CD4-positive, alpha-beta T cell (primary cell): ENCODE measurements at regions of chr3 and their contacts with region 1.

Region 1: GRCh38 chr3:69051756-69052471 is at the start of gene TMF1:
- DNase-seq: peak; percentile 94 to 100 (median 97)
- ATAC-seq: peak; percentile 86
- H3K4me3 ChIP-seq: peak within 1 kb of the TSS; percentile 81
- H3K4me3 Mint-ChIP-seq: peak within 1 kb of the TSS; percentile 98
- H3K27ac ChIP-seq: peak within 1 kb of the TSS; percentile 93 to 95
- H3K27ac Mint-ChIP-seq: peak within 1 kb of the TSS; percentile 99
- H3K4me1 ChIP-seq: peaks cover 17% of the 10 kb centered on the region
- H3K4me1 Mint-ChIP-seq: peaks cover 55% of the 10 kb centered on the region
- H3K27me3 ChIP-seq: no peaks in the 10 kb centered on the region
- H3K27me3 Mint-ChIP-seq: no peaks in the 10 kb centered on the region
- CTCF ChIP-seq: no peak
- total RNA-seq, gene TMF1: 89.0 to 101 TPM

Region 2: GRCh38 chr3:69013253-69014021 is 38.5 kb before region 1 on chr3 and contains the start of gene EOGT:
- CTCF ChIA-PET with region 1: no interaction called
- POLR2A ChIA-PET with region 1: interaction called, 14 read pairs
- intact Hi-C with region 1: loop called (anchors 5 kb)
- DNase-seq: peak; percentile 60 to 90 (median 76)
- ATAC-seq: peak; percentile 78
- H3K4me3 ChIP-seq: peak within 1 kb of the TSS; percentile 77
- H3K4me3 Mint-ChIP-seq: peak within 1 kb of the TSS; percentile 94
- H3K27ac ChIP-seq: peak within 1 kb of the TSS; percentile 10 to 39
- H3K27ac Mint-ChIP-seq: peak within 1 kb of the TSS; percentile 66
- H3K4me1 ChIP-seq: peaks cover 17% of the 10 kb centered on the region
- H3K4me1 Mint-ChIP-seq: peaks cover 34% of the 10 kb centered on the region
- H3K27me3 ChIP-seq: no peaks in the 10 kb centered on the region
- H3K27me3 Mint-ChIP-seq: no peaks in the 10 kb centered on the region
- CTCF ChIP-seq: peak; percentile 69
- total RNA-seq, gene EOGT: 13.0 to 13.4 TPM

Region 3: GRCh38 chr3:69065318-69065964 is 13.5 kb after region 1 on chr3:
- CTCF ChIA-PET with region 1: interaction called, 4 read pairs
- POLR2A ChIA-PET with region 1: interaction called, 17 read pairs
- intact Hi-C with region 1: loop called in 1 of 2 experiments (anchors 1 kb)
- DNase-seq: peak in 4 of 14 experiments; percentile 35 to 72 (median 52)
- ATAC-seq: peak; percentile 69
- H3K4me3 ChIP-seq: no peak overlapping the region
- H3K4me3 Mint-ChIP-seq: peak overlapping the region; percentile 65
- H3K27ac ChIP-seq: peak overlapping the region; percentile 30 to 49
- H3K27ac Mint-ChIP-seq: peak overlapping the region; percentile 78
- H3K4me1 ChIP-seq: peaks cover 15% of the 10 kb centered on the region
- H3K4me1 Mint-ChIP-seq: peaks cover 37% of the 10 kb centered on the region
- H3K27me3 ChIP-seq: no peaks in the 10 kb centered on the region
- H3K27me3 Mint-ChIP-seq: no peaks in the 10 kb centered on the region
- CTCF ChIP-seq: no peak

Region 4: GRCh38 chr3:69079269-69080159 is 27.6 kb after region 1 on chr3:
- CTCF ChIA-PET with region 1: interaction called, 19 read pairs
- POLR2A ChIA-PET with region 1: interaction called, 94 read pairs
- intact Hi-C with region 1: loop called (anchors 1 to 2 kb)
- DNase-seq: peak in 3 of 14 experiments; percentile 23 to 48 (median 38)
- ATAC-seq: no peak
- H3K4me3 ChIP-seq: peak overlapping the region; percentile 70
- H3K4me3 Mint-ChIP-seq: peak overlapping the region; percentile 87
- H3K27ac ChIP-seq: peak overlapping the region in 1 of 2 donors; percentile 52
- H3K27ac Mint-ChIP-seq: peak overlapping the region; percentile 96
- H3K4me1 ChIP-seq: peaks cover 49% of the 10 kb centered on the region
- H3K4me1 Mint-ChIP-seq: peaks cover 67% of the 10 kb centered on the region
- H3K27me3 ChIP-seq: no peaks in the 10 kb centered on the region
- H3K27me3 Mint-ChIP-seq: no peaks in the 10 kb centered on the region
- CTCF ChIP-seq: no peak

Region 5: GRCh38 chr3:69084326-69085167 is 32.6 kb after region 1 on chr3 and contains the start of gene ARL6IP5:
- CTCF ChIA-PET with region 1: interaction called, 19 read pairs
- POLR2A ChIA-PET with region 1: interaction called, 94 read pairs
- intact Hi-C with region 1: loop called (anchors 1 to 2 kb)
- DNase-seq: peak; percentile 80 to 97 (median 88)
- ATAC-seq: peak; percentile 74
- H3K4me3 ChIP-seq: peak within 1 kb of the TSS; percentile 85
- H3K4me3 Mint-ChIP-seq: peak within 1 kb of the TSS; percentile 91
- H3K27ac ChIP-seq: peak within 1 kb of the TSS; percentile 91
- H3K27ac Mint-ChIP-seq: peak within 1 kb of the TSS; percentile 96
- H3K4me1 ChIP-seq: peaks cover 58% of the 10 kb centered on the region
- H3K4me1 Mint-ChIP-seq: peaks cover 73% of the 10 kb centered on the region
- H3K27me3 ChIP-seq: no peaks in the 10 kb centered on the region
- H3K27me3 Mint-ChIP-seq: no peaks in the 10 kb centered on the region
- CTCF ChIP-seq: no peak
- total RNA-seq, gene ARL6IP5: 58.0 to 65.2 TPM

Region 6: GRCh38 chr3:69092030-69092516 is 40.2 kb after region 1 on chr3:
- CTCF ChIA-PET with region 1: interaction called, 4 read pairs
- POLR2A ChIA-PET with region 1: interaction called, 52 read pairs
- intact Hi-C with region 1: loop called in 1 of 2 experiments (anchors 2 kb)
- DNase-seq: peak in 5 of 14 experiments; percentile 9 to 69 (median 66)
- ATAC-seq: peak; percentile 71
- H3K4me3 ChIP-seq: peak overlapping the region; percentile 40
- H3K4me3 Mint-ChIP-seq: peak overlapping the region; percentile 80
- H3K27ac ChIP-seq: peak overlapping the region; percentile 77 to 78
- H3K27ac Mint-ChIP-seq: peak overlapping the region; percentile 92
- H3K4me1 ChIP-seq: peaks cover 90% of the 10 kb centered on the region
- H3K4me1 Mint-ChIP-seq: peaks cover 89% of the 10 kb centered on the region
- H3K27me3 ChIP-seq: no peaks in the 10 kb centered on the region
- H3K27me3 Mint-ChIP-seq: no peaks in the 10 kb centered on the region
- CTCF ChIP-seq: no peak

Region 7: GRCh38 chr3:69120879-69121464 is 69.1 kb after region 1 on chr3:
- CTCF ChIA-PET with region 1: interaction called, 10 read pairs
- POLR2A ChIA-PET with region 1: interaction called, 9 read pairs
- intact Hi-C with region 1: no loop called
- DNase-seq: peak; percentile 61 to 90 (median 79)
- ATAC-seq: peak; percentile 94
- H3K4me3 ChIP-seq: no peak overlapping the region
- H3K4me3 Mint-ChIP-seq: no peak overlapping the region
- H3K27ac ChIP-seq: no peak overlapping the region
- H3K27ac Mint-ChIP-seq: no peak overlapping the region
- H3K4me1 ChIP-seq: no peaks in the 10 kb centered on the region
- H3K4me1 Mint-ChIP-seq: peaks cover 7% of the 10 kb centered on the region
- H3K27me3 ChIP-seq: no peaks in the 10 kb centered on the region
- H3K27me3 Mint-ChIP-seq: no peaks in the 10 kb centered on the region
- CTCF ChIP-seq: peak; percentile 93